ENCODE measurements at regions of chr1 and their contacts with region 1.

Region 1: GRCh38 chr1:112818990-112819689 is 104.0 kb upstream of the PPM1J start:
- DNase-seq: no peak
- ATAC-seq: no peak
- H3K4me3 Mint-ChIP-seq: peak overlapping the region; percentile 14; the same call in 1 of the 2 replicates
- H3K27ac Mint-ChIP-seq: peak overlapping the region; percentile 98
- H3K4me1 Mint-ChIP-seq: peaks cover 45% of the 10 kb centered on the region
- H3K27me3 Mint-ChIP-seq: no peaks in the 10 kb centered on the region
- CTCF ChIP-seq: no peak

Region 2: GRCh38 chr1:112614460-112615065 is 204.6 kb before region 1 on chr1:
- CTCF ChIA-PET with region 1: no interaction called
- POLR2A ChIA-PET with region 1: no interaction called
- DNase-seq: no peak
- ATAC-seq: peak; percentile 23; the same call in 1 of the 2 replicates
- H3K4me3 Mint-ChIP-seq: no peak overlapping the region
- H3K27ac Mint-ChIP-seq: no peak overlapping the region
- H3K4me1 Mint-ChIP-seq: peaks cover 7% of the 10 kb centered on the region
- H3K27me3 Mint-ChIP-seq: no peaks in the 10 kb centered on the region
- CTCF ChIP-seq: no peak

Region 3: DNA sequence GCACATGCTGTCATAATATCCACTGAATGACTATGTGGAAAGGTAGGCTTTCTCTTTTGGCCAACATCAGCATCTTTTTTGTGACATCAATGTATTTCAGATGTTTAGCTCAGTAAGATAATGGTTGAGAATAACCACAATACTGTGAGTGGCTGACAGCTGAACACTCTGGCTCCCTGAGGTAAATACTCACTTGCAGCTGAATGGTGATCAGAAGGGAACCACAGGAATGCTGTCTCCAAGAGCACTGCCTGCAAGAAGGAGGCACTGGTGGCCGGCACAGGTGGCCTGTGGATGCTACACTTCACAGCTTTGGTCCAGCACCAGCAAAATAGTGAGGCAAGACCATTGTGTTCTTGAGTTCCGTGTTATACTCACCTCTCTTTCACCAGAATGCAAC is 14.7 kb after region 1 on chr1:
- CTCF ChIA-PET with region 1: no interaction called
- POLR2A ChIA-PET with region 1: interaction called, 10 read pairs
- DNase-seq: no peak
- ATAC-seq: no peak; the same call in 1 of the 2 replicates
- H3K4me3 Mint-ChIP-seq: no peak overlapping the region
- H3K27ac Mint-ChIP-seq: no peak overlapping the region
- H3K4me1 Mint-ChIP-seq: peaks cover 18% of the 10 kb centered on the region
- H3K27me3 Mint-ChIP-seq: peaks cover 28% of the 10 kb centered on the region
- CTCF ChIP-seq: no peak

Region 4: DNA sequence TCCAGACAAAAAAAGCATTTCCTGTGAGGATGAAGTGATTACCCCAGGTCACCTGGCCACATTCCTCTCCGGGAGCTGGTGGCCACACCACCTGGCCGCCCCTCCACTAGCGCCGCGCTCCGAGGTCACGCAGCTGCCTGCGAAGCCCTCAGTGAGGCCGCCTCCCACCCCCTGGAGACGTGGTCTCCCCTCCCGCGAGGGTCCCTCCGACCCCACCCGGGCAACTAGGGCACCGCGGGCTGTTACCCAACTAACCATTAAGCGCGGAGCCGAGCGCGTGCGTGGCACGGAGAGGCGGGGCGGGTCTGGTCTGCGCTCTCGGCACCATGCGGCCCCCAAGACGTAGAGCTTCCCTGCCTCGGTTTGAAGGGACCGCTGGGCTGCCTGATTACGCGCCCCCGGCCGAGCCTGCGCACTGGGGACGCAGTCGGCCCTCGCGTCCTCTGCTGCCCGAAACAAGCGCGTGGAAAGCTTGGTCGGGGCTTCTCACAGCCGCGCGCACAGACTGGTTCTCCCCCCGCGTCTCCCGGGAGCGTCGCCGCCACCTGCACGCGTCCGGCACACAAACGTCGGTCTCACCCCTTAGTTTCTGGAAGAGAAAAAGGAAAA is 30.4 kb after region 1 on chr1:
- CTCF ChIA-PET with region 1: interaction called, 5 read pairs
- POLR2A ChIA-PET with region 1: interaction called, 11 read pairs
- DNase-seq: peak; percentile 56
- ATAC-seq: peak; percentile 71
- H3K4me3 Mint-ChIP-seq: peak overlapping the region; percentile 65
- H3K27ac Mint-ChIP-seq: no peak overlapping the region; the same call in 1 of the 2 replicates
- H3K4me1 Mint-ChIP-seq: peaks cover 55% of the 10 kb centered on the region
- H3K27me3 Mint-ChIP-seq: peaks cover 16% of the 10 kb centered on the region
- CTCF ChIP-seq: no peak

Region 5: DNA sequence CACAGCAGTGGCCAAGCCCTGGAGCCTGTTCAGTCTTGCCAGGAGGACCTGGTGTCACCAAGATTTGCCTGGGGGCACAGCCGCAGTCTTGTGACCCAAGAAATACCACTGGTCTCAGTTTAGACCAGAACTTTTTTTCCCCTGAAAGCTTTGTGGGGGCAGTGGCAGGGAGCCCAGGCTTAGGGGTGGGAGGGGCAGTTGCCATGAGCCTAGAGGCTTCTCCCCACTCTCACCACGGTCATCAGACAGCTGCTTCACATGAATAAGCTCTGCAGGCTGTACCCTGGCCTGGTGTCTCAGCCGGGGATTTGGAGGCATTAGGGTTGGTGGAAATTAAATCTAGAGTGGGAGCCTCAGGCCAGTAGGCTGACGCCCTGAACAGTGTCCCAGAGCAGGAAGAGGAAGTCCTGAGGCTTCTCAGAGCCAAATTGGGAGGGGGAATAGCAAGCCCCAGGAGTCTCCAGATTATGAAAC is 63.2 kb after region 1 on chr1:
- CTCF ChIA-PET with region 1: interaction called, 11 read pairs
- POLR2A ChIA-PET with region 1: interaction called, 6 read pairs
- DNase-seq: no peak
- ATAC-seq: no peak
- H3K4me3 Mint-ChIP-seq: no peak overlapping the region
- H3K27ac Mint-ChIP-seq: no peak overlapping the region
- H3K4me1 Mint-ChIP-seq: peaks cover 53% of the 10 kb centered on the region
- H3K27me3 Mint-ChIP-seq: no peaks in the 10 kb centered on the region
- CTCF ChIP-seq: no peak